ENCODE measurements at regions of chr7 and their contacts with region 1.

Region 1: DNA sequence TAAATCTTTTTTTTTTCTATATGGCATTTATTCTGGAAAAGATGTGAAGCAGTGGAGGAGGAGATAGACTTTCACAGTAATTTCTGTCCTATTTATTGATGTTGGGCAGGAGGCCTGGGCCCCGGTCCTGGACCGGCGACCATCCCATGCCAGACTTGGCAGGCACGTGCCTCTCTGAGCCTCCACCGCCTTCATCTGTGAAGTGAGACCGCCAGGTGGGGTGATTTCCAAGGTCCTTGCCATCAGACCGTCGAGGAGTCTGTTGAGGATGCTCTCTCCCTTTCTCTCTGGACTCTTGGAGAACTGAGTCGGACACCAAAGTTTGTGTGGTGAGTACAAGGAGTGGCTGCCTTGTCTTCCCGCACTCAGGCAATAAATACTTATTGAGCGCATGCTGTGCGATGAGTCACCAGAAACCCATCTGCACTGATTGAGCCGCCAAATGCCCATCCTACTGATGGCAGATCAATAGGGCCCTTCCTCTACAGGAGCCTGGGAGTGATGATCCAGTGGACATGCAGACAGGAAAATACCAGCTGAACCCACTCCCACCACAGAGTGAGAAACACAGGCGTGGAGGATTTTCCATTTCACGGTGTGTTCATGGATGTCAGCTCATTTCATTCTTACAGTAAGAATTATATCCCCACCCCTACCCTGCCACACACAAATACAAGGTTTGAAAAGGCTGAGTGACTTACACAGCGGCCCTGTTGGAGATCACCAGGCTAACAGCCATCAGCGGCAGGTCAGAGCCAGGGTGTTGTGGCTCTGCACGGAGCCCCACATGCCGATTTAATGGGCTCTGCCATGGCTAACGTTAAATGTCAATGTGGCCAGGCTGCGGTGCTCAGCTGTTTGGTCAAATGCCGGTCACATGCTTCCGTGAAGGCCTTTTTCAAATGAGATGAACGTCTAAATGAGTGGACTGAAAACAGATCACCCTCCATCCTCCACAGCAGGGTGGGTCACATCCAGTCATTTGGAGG is 11.5 kb upstream of the PRKAG2 start:
- DNase-seq: peak; percentile 23
- ATAC-seq: peak; percentile 69
- H3K4me3 ChIP-seq: no peak overlapping the region
- H3K27ac ChIP-seq: no peak overlapping the region
- H3K4me1 ChIP-seq: no peaks in the 10 kb centered on the region
- H3K27me3 ChIP-seq: peaks cover 55% of the 10 kb centered on the region
- CTCF ChIP-seq: peak; percentile 37; the same call in 1 of the 2 replicates

Region 2: GRCh38 chr7:151992375-151992774 is 104.0 kb after region 1 on chr7:
- CTCF ChIA-PET with region 1: no interaction called
- POLR2A ChIA-PET with region 1: no interaction called
- intact Hi-C with region 1: loop called (anchors 5 kb)
- DNase-seq: peak; percentile 68
- ATAC-seq: peak; percentile 99
- H3K4me3 ChIP-seq: peak overlapping the region; percentile 20; the same call in 1 of the 2 replicates
- H3K27ac ChIP-seq: no peak overlapping the region
- H3K4me1 ChIP-seq: no peaks in the 10 kb centered on the region
- H3K27me3 ChIP-seq: no peaks in the 10 kb centered on the region
- CTCF ChIP-seq: peak; percentile 53

Measured in PC-3 (cell line).